Natural killer cell (primary cell): ENCODE measurements at regions of chr12 and their contacts with region 1.

Region 1: DNA sequence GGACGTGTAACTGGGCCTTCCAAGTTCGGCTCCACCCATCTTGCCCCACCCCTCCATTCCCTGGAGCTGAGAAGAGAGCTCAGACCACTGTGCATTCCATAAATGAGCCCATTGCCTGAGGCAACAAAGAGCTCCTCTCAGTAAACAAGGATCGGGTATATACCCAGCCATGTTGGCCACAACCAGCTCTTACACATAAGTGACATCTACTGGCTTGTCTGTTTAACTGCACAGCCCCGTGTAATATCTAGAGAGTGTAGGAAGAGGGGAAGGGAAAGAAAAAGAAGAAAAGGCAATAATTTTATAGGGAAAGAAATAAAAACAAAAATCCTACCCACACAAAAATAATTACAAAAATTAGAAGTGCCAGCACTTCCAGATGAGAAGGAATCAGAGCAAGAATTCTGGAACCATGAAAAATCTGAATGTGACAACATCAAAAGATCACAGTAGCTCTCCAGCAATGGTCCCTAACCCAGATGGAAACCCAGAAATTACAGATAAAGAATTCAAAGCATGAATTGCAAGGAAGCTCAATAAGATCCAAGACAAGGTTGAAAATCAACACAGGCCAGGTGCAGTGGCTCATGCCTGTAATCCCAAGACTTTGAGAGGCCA is 308.1 kb downstream of the RPAP3 start:
- DNase-seq: peak in 1 of 2 donors; percentile 77
- ATAC-seq: peak; percentile 90 to 97 (median 97)
- H3K4me3 ChIP-seq: no peak overlapping the region
- H3K4me3 Mint-ChIP-seq: no peak overlapping the region
- H3K27ac ChIP-seq: peak overlapping the region; percentile 11
- H3K27ac Mint-ChIP-seq: peak overlapping the region in 1 of 2 donors; percentile 76
- H3K4me1 ChIP-seq: peaks cover 13% of the 10 kb centered on the region
- H3K4me1 Mint-ChIP-seq: peaks cover 3 to 18% of the 10 kb centered on the region in 2 donors
- H3K27me3 ChIP-seq: no peaks in the 10 kb centered on the region
- H3K27me3 Mint-ChIP-seq: no peaks in the 10 kb centered on the region
- CTCF ChIP-seq: peak; percentile 68

Region 2: GRCh38 chr12:47079468-47079980 is 318.2 kb before region 1 on chr12 and contains the starts of genes AMIGO2 and PCED1B:
- intact Hi-C with region 1: loop called (anchors 2 kb)
- DNase-seq: peak; percentile 47 to 73
- ATAC-seq: peak; percentile 47 to 67 (median 60)
- H3K4me3 ChIP-seq: peak within 1 kb of the TSS; percentile 94
- H3K4me3 Mint-ChIP-seq: peak within 1 kb of the TSS; percentile 100
- H3K27ac ChIP-seq: peak within 1 kb of the TSS; percentile 74
- H3K27ac Mint-ChIP-seq: peak within 1 kb of the TSS; percentile 82 to 95
- H3K4me1 ChIP-seq: peaks cover 18% of the 10 kb centered on the region
- H3K4me1 Mint-ChIP-seq: peaks cover 54% of the 10 kb centered on the region in 2 donors
- H3K27me3 ChIP-seq: no peaks in the 10 kb centered on the region
- H3K27me3 Mint-ChIP-seq: no peaks in the 10 kb centered on the region
- CTCF ChIP-seq: no peak
- total RNA-seq, gene AMIGO2: 8.0 to 9.9 (median 8.1) TPM
- total RNA-seq, gene PCED1B: 30.2 to 35.9 (median 33.3) TPM

Region 3: GRCh38 chr12:47276621-47277309 is 121.0 kb before region 1 on chr12:
- intact Hi-C with region 1: loop called (anchors 2 kb)
- DNase-seq: peak; percentile 44 to 87
- ATAC-seq: peak; percentile 93 to 97 (median 97)
- H3K4me3 ChIP-seq: no peak overlapping the region
- H3K4me3 Mint-ChIP-seq: peak overlapping the region; percentile 60
- H3K27ac ChIP-seq: peak overlapping the region; percentile 89
- H3K27ac Mint-ChIP-seq: peak overlapping the region; percentile 86 to 94
- H3K4me1 ChIP-seq: peaks cover 22% of the 10 kb centered on the region
- H3K4me1 Mint-ChIP-seq: peaks cover 35 to 40% of the 10 kb centered on the region in 2 donors
- H3K27me3 ChIP-seq: no peaks in the 10 kb centered on the region
- H3K27me3 Mint-ChIP-seq: peaks cover 0 to 4% of the 10 kb centered on the region in 2 donors
- CTCF ChIP-seq: no peak

Region 4: DNA sequence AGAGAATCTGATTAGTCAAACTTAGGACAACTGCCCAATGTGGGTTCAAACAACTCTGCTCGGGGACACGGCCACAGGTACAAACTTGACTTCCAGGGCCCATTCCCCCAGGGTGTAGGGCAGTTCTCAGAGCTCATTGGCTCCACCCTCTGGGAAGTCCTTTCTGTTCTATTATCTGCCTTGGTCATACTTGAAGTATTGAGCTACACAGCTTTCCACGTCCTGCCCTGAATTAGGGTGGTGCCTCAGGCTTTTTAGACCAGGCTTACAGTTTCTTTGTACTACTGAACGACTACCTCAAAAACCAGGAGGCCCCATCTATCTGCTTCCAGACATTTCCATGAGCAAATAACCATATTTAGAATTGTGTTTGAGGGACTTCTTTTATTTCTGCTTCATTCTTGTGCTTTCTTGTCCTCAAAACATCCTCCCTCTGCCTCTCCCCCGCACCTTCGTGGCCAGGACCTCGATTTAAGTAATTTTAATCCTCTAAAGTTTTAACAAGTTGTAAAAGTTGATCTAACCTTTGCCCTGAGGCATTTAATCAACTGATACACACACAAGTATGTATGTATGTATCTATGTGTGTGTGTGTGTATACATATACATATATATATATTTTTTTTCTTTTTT is 36.3 kb before region 1 on chr12:
- intact Hi-C with region 1: loop called (anchors 5 kb)
- DNase-seq: peak in 1 of 2 donors; percentile 70
- ATAC-seq: peak; percentile 72 to 81 (median 78)
- H3K4me3 ChIP-seq: peak overlapping the region; percentile 29
- H3K4me3 Mint-ChIP-seq: peak overlapping the region; percentile 75
- H3K27ac ChIP-seq: peak overlapping the region; percentile 97
- H3K27ac Mint-ChIP-seq: peak overlapping the region; percentile 91 to 93
- H3K4me1 ChIP-seq: peaks cover 47% of the 10 kb centered on the region
- H3K4me1 Mint-ChIP-seq: peaks cover 39 to 45% of the 10 kb centered on the region in 2 donors
- H3K27me3 ChIP-seq: no peaks in the 10 kb centered on the region
- H3K27me3 Mint-ChIP-seq: no peaks in the 10 kb centered on the region
- CTCF ChIP-seq: no peak

Region 5: DNA sequence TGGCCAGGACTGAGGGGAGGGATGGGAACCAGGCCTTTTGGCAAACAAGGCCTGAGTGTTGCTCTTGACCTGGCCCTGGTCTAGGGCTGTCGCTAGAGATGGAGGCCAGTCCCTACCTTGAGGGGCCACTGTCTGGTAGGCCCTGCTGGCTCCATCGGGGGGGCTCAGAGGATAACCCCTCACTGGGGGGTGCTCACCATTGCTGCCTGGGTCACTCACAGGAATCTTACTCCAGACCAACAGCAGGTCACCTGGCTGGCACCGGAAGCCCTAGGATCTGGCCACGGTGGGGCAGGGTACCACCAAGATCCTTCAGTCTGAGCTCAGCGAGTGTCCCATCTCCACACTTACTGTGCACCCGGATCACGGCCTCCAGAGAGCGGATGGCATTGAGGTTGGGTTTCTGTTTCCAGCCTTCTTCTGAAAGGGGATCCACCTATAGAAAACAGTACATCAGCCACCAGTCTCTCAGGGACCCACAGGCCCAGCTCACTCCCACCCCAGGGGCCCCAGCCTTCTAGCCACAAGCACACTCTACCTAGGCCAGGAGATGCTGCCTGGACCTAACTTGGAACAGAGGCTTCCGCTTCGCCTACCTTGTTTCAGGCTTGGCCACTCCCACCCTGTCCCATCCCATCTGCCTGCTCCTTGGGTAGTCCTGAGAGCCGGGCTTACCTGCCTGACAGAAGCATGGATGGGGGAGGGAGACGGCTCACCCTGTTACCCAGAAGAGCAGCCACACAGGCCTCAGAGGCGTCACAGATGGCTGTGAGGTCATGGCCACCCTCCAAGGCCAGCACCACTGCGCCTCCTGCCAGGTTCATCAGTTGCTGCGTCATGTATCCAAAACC is 387.5 kb after region 1 on chr12:
- intact Hi-C with region 1: no loop called
- DNase-seq: no peak
- ATAC-seq: no peak
- H3K4me3 ChIP-seq: no peak overlapping the region
- H3K4me3 Mint-ChIP-seq: no peak overlapping the region
- H3K27ac ChIP-seq: no peak overlapping the region
- H3K27ac Mint-ChIP-seq: peak overlapping the region in 1 of 2 donors; percentile 34
- H3K4me1 ChIP-seq: no peaks in the 10 kb centered on the region
- H3K4me1 Mint-ChIP-seq: peaks cover 0 to 12% of the 10 kb centered on the region in 2 donors
- H3K27me3 ChIP-seq: no peaks in the 10 kb centered on the region
- H3K27me3 Mint-ChIP-seq: no peaks in the 10 kb centered on the region
- CTCF ChIP-seq: no peak